Activated CD8-positive, alpha-beta T cell treated with anti-CD3 and anti-CD28 coated beads, Interleukin-2, amount 10 ng/mL, durations not matched to agents 7 days and 5 days (primary cell): ENCODE measurements at regions of chr14 and their contacts with region 1.

Region 1: DNA sequence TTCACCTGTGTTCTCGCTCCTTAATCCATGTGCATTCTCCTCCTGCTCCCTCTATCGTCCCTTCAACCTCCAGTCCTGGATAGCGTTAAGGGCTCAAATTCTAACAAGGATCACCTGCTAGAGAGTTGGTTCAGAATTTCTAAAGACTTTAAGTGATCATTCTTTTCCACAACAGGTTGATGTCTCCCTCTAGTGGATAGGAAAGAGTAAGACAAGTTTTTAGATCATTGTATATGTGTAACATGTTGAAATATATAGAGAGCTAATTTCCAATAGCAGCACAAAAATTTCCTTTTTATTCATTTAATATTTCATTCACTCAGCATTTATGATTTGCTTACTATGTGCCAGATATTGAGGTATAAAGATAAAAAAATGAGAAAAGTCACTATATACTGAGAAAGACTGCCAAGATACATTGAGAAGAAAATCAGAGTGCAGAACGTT is 9.3 kb upstream of the ESR2 start:
- DNase-seq: no peak
- ATAC-seq: peak; percentile 81
- H3K4me3 Mint-ChIP-seq: no peak overlapping the region
- H3K27ac Mint-ChIP-seq: no peak overlapping the region
- H3K4me1 Mint-ChIP-seq: peaks cover 1% of the 10 kb centered on the region
- H3K27me3 Mint-ChIP-seq: peaks cover 9% of the 10 kb centered on the region

Region 2: GRCh38 chr14:63800651-63801375 is 502.7 kb before region 1 on chr14:
- CTCF ChIA-PET with region 1: interaction called, 32 read pairs
- POLR2A ChIA-PET with region 1: no interaction called
- DNase-seq: no peak
- ATAC-seq: no peak
- H3K4me3 Mint-ChIP-seq: no peak overlapping the region
- H3K27ac Mint-ChIP-seq: no peak overlapping the region
- H3K4me1 Mint-ChIP-seq: peaks cover 14% of the 10 kb centered on the region
- H3K27me3 Mint-ChIP-seq: peaks cover 9% of the 10 kb centered on the region

Region 3: GRCh38 chr14:64012003-64012402 is 291.5 kb before region 1 on chr14:
- CTCF ChIA-PET with region 1: interaction called, 12 read pairs
- POLR2A ChIA-PET with region 1: no interaction called
- DNase-seq: no peak
- ATAC-seq: no peak
- H3K4me3 Mint-ChIP-seq: no peak overlapping the region
- H3K27ac Mint-ChIP-seq: no peak overlapping the region
- H3K4me1 Mint-ChIP-seq: no peaks in the 10 kb centered on the region
- H3K27me3 Mint-ChIP-seq: no peaks in the 10 kb centered on the region

Region 4: DNA sequence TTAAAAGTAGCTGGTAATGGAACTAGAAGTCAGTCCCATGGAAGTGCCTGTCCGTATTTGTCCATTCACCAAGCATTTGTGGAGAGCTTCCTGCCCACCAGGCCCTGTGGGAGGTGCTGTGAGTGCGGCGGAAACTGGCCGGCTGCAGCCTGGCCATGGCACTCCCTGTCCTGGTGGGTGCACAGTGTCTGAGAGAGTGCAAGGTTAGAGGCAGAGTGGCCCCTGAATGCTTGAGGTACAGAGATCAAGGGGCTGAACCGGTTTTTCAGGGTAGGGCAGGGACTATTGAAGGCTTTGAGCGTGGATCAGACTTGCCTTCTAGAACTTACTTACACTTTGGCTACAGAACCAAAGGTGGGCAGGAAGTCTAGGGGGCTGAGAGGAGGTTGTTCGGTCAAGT is 102.2 kb before region 1 on chr14:
- CTCF ChIA-PET with region 1: interaction called, 11 read pairs
- POLR2A ChIA-PET with region 1: no interaction called
- DNase-seq: no peak
- ATAC-seq: no peak
- H3K4me3 Mint-ChIP-seq: no peak overlapping the region
- H3K27ac Mint-ChIP-seq: no peak overlapping the region
- H3K4me1 Mint-ChIP-seq: peaks cover 2% of the 10 kb centered on the region
- H3K27me3 Mint-ChIP-seq: no peaks in the 10 kb centered on the region

Region 5: DNA sequence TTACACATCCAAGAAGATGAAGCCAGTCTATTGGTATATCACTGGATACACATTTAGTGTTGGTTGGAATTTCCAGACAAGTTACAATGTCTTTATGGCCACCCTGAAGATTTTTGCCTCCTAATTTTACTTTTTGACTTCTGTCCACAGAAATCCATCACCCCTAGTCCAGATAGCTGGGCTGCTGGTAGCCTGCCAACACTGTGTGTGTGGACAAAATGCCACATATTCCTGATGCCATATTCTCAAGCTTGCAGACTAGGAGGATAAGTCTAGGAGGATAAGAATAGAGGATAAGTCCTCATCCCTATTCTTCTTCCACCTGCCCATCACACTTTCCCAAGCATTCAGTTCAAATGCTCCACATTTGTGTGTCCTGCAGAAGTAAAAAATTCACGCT is 13.9 kb before region 1 on chr14:
- CTCF ChIA-PET with region 1: interaction called, 39 read pairs
- POLR2A ChIA-PET with region 1: no interaction called
- DNase-seq: no peak
- ATAC-seq: no peak
- H3K4me3 Mint-ChIP-seq: no peak overlapping the region
- H3K27ac Mint-ChIP-seq: no peak overlapping the region
- H3K4me1 Mint-ChIP-seq: peaks cover 12% of the 10 kb centered on the region
- H3K27me3 Mint-ChIP-seq: peaks cover 19% of the 10 kb centered on the region

Region 6: DNA sequence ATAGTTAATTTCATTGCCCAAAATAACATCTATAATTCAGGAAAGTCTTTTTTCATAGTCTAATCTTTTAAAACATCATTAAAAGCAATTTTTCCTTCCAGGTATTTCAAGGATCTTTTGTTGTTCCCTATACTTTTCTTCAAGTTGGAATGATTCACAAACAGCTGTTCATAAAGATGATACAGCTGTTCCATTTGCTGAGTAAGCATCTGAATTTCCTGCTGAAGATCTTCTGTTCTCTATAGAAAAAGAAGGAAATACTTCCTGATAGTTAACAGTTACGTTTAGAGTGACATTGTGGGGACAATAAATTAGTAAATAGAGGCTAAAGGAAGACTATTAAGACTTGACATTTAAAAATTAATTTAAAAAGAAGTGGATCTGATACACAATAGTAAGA is 21.0 kb after region 1 on chr14:
- CTCF ChIA-PET with region 1: interaction called, 20 read pairs
- POLR2A ChIA-PET with region 1: no interaction called
- DNase-seq: no peak
- ATAC-seq: no peak
- H3K4me3 Mint-ChIP-seq: no peak overlapping the region
- H3K27ac Mint-ChIP-seq: no peak overlapping the region
- H3K4me1 Mint-ChIP-seq: no peaks in the 10 kb centered on the region
- H3K27me3 Mint-ChIP-seq: peaks cover 19% of the 10 kb centered on the region

Region 7: DNA sequence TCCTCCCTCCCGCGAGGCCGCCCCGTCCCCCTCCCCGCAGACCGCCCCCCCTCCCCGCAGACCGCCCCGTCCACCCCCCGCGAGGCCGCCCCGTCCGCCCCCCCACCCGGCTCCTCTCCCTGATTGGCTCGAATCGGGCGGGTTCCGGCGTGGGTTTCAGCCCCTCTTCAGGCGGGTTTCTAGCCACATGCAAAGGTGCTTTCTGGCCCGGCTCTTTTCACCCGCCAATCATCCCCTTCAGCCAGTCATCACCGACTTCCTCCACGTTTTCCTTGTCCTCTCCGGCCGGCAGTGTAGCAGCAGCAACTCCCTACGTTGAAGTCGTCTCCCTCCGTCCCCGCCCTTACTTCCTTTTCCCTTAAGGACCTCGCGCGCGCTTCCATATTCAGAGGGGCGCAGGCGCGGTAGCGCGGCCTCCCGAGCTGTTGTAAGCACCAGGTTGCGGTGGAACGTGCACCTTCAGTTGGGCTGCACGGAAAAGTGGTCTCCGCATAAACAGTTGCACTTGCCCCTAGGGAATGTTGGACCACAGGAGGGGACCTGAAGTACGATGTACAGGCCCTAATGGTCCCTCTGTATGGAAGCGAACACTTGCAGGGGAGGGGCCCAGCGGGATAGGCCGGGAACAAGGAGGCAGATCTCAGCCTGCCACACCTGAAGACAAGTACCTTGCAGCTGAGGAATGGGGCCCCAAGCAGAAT is 35.3 kb after region 1 on chr14:
- CTCF ChIA-PET with region 1: interaction called, 10 read pairs
- POLR2A ChIA-PET with region 1: no interaction called
- DNase-seq: peak; percentile 96
- ATAC-seq: peak; percentile 85
- H3K4me3 Mint-ChIP-seq: peak overlapping the region; percentile 92
- H3K27ac Mint-ChIP-seq: peak overlapping the region; percentile 92
- H3K4me1 Mint-ChIP-seq: peaks cover 30% of the 10 kb centered on the region
- H3K27me3 Mint-ChIP-seq: no peaks in the 10 kb centered on the region